Endothelial cell of umbilical vein (primary cell): ENCODE measurements at regions of chr1 and their contacts with region 1.

Region 1: DNA sequence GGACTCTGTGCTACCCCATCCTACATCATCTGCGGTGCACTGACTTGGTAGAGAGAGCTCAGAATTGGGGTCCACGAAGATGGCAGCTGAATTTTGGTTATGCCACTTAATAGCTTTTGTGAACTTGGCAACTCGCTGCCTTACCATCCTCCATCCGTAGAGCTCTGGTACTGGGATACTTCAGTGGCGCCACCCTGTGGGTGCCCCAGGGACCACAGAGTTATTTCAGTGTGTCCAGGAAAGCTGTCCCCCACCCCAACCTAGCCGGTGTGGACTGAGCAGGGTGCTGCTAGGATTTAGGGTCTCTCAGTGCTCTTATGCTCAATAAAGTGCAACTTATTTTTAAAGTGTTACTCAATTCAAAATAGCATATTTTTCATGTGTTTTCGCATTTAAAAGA is 9.0 kb upstream of the USF1 start:
- DNase-seq: no peak
- H3K4me3 ChIP-seq: no peak overlapping the region
- H3K27ac ChIP-seq: no peak overlapping the region
- H3K4me1 ChIP-seq: no peaks in the 10 kb centered on the region
- H3K27me3 ChIP-seq: no peaks in the 10 kb centered on the region
- CTCF ChIP-seq: no peak
- POLR2A ChIP-seq: no peak

Region 2: GRCh38 chr1:160328184-160328583 is 726.6 kb before region 1 on chr1:
- CTCF ChIA-PET with region 1: no interaction called
- POLR2A ChIA-PET with region 1: no interaction called
- dilution Hi-C with region 1: no loop called
- intact Hi-C with region 1: loop called (anchors 10 kb)
- DNase-seq: no peak
- H3K4me3 ChIP-seq: no peak overlapping the region
- H3K27ac ChIP-seq: no peak overlapping the region
- H3K4me1 ChIP-seq: no peaks in the 10 kb centered on the region
- H3K27me3 ChIP-seq: no peaks in the 10 kb centered on the region
- CTCF ChIP-seq: no peak
- POLR2A ChIP-seq: no peak

Region 3: GRCh38 chr1:161864577-161864976 is 809.8 kb after region 1 on chr1:
- CTCF ChIA-PET with region 1: no interaction called
- POLR2A ChIA-PET with region 1: no interaction called
- dilution Hi-C with region 1: no loop called
- intact Hi-C with region 1: no loop called
- DNase-seq: peak; percentile 69
- H3K4me3 ChIP-seq: no peak overlapping the region
- H3K27ac ChIP-seq: no peak overlapping the region
- H3K4me1 ChIP-seq: peaks cover 6% of the 10 kb centered on the region
- H3K27me3 ChIP-seq: no peaks in the 10 kb centered on the region
- CTCF ChIP-seq: peak; percentile 7 to 27
- POLR2A ChIP-seq: no peak